ENCODE measurements at regions of chr20 and their contacts with region 1.

Region 1: GRCh38 chr20:5670874-5671273 is 79.3 kb upstream of the SHLD1 start:
- DNase-seq: no peak
- H3K4me3 ChIP-seq: no peak overlapping the region
- H3K27ac ChIP-seq: no peak overlapping the region
- H3K27me3 ChIP-seq: peaks cover 8% of the 10 kb centered on the region
- CTCF ChIP-seq: no peak

Region 2: DNA sequence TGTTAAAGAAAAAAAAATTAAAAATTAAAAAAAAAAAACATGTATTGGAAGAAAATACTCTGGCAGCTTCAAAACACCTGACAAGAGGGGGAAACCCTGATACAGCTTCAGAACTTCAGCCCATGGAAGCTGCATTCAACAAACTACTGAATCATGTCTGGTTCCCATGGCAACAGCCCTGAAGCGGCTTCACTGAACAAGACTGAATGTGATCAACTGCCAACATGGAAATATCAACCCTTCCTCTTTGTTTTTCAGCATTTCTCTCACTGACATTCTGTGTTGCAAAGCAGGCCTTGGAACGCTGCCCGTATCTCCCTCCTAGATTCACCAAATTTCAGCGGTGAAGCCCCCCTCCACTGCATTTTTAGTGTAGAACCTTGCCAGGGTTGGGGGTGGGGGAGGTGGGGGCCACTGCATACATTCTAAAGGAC is 11.9 kb before region 1 on chr20:
- CTCF ChIA-PET with region 1: no interaction called
- POLR2A ChIA-PET with region 1: no interaction called
- DNase-seq: peak; percentile 64
- H3K4me3 ChIP-seq: peak overlapping the region; percentile 7; the same call in 1 of the 2 replicates
- H3K27ac ChIP-seq: peak overlapping the region; percentile 65
- H3K27me3 ChIP-seq: no peaks in the 10 kb centered on the region
- CTCF ChIP-seq: no peak

Region 3: GRCh38 chr20:5686384-5687105 is 15.7 kb after region 1 on chr20:
- CTCF ChIA-PET with region 1: no interaction called
- POLR2A ChIA-PET with region 1: no interaction called
- DNase-seq: no peak
- H3K4me3 ChIP-seq: no peak overlapping the region
- H3K27ac ChIP-seq: no peak overlapping the region
- H3K27me3 ChIP-seq: peaks cover 8% of the 10 kb centered on the region
- CTCF ChIP-seq: no peak

Region 4: DNA sequence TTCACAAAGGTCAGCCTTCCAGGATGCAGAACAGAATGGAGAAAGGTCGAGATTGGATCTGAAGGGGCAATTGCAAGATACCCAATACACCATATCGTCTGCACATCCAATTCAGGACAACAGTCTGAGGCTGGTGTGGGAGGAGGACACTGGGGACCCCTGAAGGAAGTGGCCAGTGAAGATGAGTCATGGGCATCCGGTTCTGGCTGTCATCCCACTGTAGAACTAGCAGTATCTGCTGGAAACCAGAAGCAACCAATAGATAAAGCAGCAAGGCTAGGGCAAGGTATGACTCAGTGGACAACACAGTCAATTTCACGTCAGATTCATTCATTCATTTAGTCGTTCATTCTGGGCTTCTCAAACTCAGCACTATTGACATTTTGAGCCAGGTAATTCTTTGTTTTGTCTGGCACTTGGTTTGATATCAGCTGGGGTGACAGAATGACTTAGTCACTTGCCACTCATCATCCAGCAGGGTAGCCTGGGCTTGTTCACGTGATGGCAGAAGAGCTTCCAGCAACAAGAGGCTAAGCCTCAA is 49.1 kb after region 1 on chr20:
- CTCF ChIA-PET with region 1: no interaction called
- POLR2A ChIA-PET with region 1: interaction called, 11 read pairs
- DNase-seq: no peak
- H3K4me3 ChIP-seq: no peak overlapping the region
- H3K27ac ChIP-seq: no peak overlapping the region
- H3K27me3 ChIP-seq: peaks cover 6% of the 10 kb centered on the region
- CTCF ChIP-seq: no peak

Measured in AG04450 (cell line).